PC-9 (cell line): ENCODE measurements at regions of chr5 and their contacts with region 1.

Region 1: GRCh38 chr5:103475629-103476240 is 86.9 kb downstream of the NUDT12 start:
- DNase-seq: peak in 1 of 2 experiments; percentile 47
- H3K4me3 ChIP-seq: no peak overlapping the region
- H3K27ac ChIP-seq: no peak overlapping the region
- H3K4me1 ChIP-seq: peaks cover 13% of the 10 kb centered on the region
- H3K27me3 ChIP-seq: no peaks in the 10 kb centered on the region
- CTCF ChIP-seq: peak; percentile 86

Region 2: GRCh38 chr5:102536323-102536928 is 939.3 kb before region 1 on chr5:
- CTCF ChIA-PET with region 1: no interaction called
- POLR2A ChIA-PET with region 1: no interaction called
- intact Hi-C with region 1: loop called (anchors 5 kb)
- DNase-seq: no peak
- H3K4me3 ChIP-seq: no peak overlapping the region
- H3K27ac ChIP-seq: no peak overlapping the region
- H3K4me1 ChIP-seq: no peaks in the 10 kb centered on the region
- H3K27me3 ChIP-seq: no peaks in the 10 kb centered on the region
- CTCF ChIP-seq: peak; percentile 70

Region 3: DNA sequence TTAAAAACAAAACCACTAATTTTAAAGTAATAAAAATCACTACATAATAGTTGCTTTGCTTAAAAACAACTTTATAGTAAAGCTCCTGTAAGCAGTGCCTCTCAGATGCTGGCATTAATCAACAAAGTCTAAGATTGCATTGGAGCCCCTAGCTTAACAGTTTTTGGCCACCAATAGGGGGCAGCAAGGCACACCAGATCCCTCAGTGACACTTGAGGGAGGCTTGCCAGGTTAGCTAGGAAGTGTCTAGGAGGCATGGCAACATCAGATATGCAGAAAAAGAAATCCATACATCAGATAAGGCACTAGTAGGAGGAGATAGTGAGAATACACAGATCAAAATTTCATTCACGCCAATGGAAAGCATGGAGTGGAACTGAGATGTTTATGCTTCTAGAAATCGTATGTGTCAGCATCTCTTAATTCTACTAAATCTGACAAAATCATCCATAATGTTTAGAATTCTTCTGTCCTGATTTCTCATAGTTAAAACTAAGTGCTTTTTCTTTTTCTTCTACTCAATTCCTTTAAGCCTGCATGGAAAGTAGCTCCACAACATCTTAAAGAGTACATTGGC is 794.2 kb before region 1 on chr5:
- CTCF ChIA-PET with region 1: no interaction called
- POLR2A ChIA-PET with region 1: no interaction called
- intact Hi-C with region 1: loop called (anchors 10 kb)
- DNase-seq: peak; percentile 42 to 64
- H3K4me3 ChIP-seq: no peak overlapping the region
- H3K27ac ChIP-seq: no peak overlapping the region
- H3K4me1 ChIP-seq: no peaks in the 10 kb centered on the region
- H3K27me3 ChIP-seq: no peaks in the 10 kb centered on the region
- CTCF ChIP-seq: peak; percentile 86

Region 4: DNA sequence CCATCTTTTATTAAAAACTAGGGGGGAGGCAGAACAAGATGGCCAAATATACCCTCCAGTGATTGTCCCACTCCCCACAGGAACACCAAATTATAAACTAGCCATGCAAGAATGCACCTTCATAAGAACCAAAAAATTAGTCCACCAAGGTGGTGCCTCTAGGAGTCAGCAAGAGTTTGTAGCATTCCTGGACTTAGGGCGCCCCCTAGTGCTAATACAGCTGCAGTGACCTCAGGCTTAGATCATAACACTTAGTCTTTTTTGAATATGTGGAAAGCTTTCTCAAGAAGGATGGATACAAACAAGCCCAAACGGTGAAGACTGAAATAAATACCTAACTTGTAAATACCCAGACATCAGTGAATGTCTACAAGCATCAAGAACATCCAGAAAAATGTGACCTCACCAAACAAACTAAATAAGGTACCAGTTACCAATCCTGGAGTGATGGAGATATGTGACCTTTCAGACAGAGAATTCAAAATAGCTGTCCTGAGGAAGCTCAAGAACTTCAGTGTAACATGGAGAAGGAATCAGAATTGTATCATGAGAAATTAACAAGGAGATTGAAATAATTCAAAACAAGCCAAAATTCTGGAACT is 336.4 kb before region 1 on chr5:
- CTCF ChIA-PET with region 1: no interaction called
- POLR2A ChIA-PET with region 1: no interaction called
- intact Hi-C with region 1: loop called (anchors 5 kb)
- DNase-seq: peak; percentile 57 to 64
- H3K4me3 ChIP-seq: no peak overlapping the region
- H3K27ac ChIP-seq: no peak overlapping the region
- H3K4me1 ChIP-seq: no peaks in the 10 kb centered on the region
- H3K27me3 ChIP-seq: no peaks in the 10 kb centered on the region
- CTCF ChIP-seq: peak; percentile 94

Region 5: GRCh38 chr5:103258368-103258956 is 217.3 kb before region 1 on chr5 and contains the start of gene MACIR:
- CTCF ChIA-PET with region 1: interaction called, 3 read pairs
- POLR2A ChIA-PET with region 1: interaction called, 4 read pairs
- intact Hi-C with region 1: loop called (anchors 1 kb)
- DNase-seq: peak; percentile 93 to 97
- H3K4me3 ChIP-seq: peak within 1 kb of the TSS; percentile 90
- H3K27ac ChIP-seq: peak within 1 kb of the TSS; percentile 73
- H3K4me1 ChIP-seq: peaks cover 34% of the 10 kb centered on the region
- H3K27me3 ChIP-seq: no peaks in the 10 kb centered on the region
- CTCF ChIP-seq: no peak
- total RNA-seq, gene MACIR: 21.0 and 28.4 TPM in 2 replicates

Region 6: DNA sequence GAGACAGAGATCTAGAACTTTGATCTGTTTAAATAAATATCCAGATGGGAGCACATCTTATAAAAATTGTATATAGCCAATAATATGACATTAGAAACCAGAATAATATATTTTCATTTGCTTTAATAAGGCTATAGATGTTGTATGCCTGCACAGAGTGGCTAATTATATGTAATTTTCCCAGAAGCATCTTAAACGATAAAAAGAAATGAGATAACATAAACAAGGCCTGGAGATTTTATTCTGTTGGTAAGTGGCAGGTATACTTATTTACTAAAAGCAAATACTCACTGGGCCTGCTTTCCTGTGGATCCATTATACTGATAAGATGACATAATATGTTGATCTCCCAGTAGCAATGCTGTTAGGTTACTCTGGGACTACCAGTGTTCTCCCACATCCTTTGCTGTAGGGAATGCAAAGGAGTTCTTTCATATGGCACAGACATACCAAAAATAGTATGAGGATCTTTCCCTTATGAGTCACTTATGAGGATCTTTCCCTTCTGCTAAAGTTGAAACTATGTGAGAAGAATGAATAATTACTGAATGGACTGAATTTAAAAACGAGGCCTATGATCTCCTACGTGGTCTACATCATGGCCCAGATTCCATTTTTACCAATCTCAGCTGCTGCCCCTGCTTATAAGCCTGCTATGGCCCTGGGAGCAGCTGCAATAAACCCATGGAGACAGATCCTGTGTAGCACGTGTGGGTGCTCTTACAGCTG is 25.2 kb before region 1 on chr5:
- CTCF ChIA-PET with region 1: no interaction called
- POLR2A ChIA-PET with region 1: no interaction called
- intact Hi-C with region 1: loop called (anchors 2 kb)
- DNase-seq: peak in 1 of 2 experiments; percentile 71
- H3K4me3 ChIP-seq: no peak overlapping the region
- H3K27ac ChIP-seq: peak overlapping the region; percentile 44
- H3K4me1 ChIP-seq: peaks cover 19% of the 10 kb centered on the region
- H3K27me3 ChIP-seq: no peaks in the 10 kb centered on the region
- CTCF ChIP-seq: no peak